ENCODE measurements at regions of chr16 and their contacts with region 1.

Region 1: GRCh38 chr16:67822511-67822910 is 15.8 kb downstream of the TSNAXIP1 start:
- DNase-seq: no peak
- ATAC-seq: peak in 1 of 8 donors; percentile 6
- H3K4me3 ChIP-seq: no peak overlapping the region
- H3K27ac ChIP-seq: no peak overlapping the region
- H3K4me1 ChIP-seq: no peaks in the 10 kb centered on the region
- H3K27me3 ChIP-seq: no peaks in the 10 kb centered on the region
- CTCF ChIP-seq: no peak

Region 2: GRCh38 chr16:67917852-67918236 is 95.3 kb after region 1 on chr16:
- intact Hi-C with region 1: loop called in 1 of 10 experiments (anchors 5 kb)
- DNase-seq: no peak
- ATAC-seq: peak in 5 of 8 donors; percentile 8 to 73 (median 36)
- H3K4me3 ChIP-seq: no peak overlapping the region
- H3K27ac ChIP-seq: peak overlapping the region in 9 of 10 donors; percentile 17 to 83 (median 53)
- H3K4me1 ChIP-seq: peaks cover 25 to 82% (median 61%) of the 10 kb centered on the region in 9 donors
- H3K27me3 ChIP-seq: no peaks in the 10 kb centered on the region
- CTCF ChIP-seq: no peak

Region 3: DNA sequence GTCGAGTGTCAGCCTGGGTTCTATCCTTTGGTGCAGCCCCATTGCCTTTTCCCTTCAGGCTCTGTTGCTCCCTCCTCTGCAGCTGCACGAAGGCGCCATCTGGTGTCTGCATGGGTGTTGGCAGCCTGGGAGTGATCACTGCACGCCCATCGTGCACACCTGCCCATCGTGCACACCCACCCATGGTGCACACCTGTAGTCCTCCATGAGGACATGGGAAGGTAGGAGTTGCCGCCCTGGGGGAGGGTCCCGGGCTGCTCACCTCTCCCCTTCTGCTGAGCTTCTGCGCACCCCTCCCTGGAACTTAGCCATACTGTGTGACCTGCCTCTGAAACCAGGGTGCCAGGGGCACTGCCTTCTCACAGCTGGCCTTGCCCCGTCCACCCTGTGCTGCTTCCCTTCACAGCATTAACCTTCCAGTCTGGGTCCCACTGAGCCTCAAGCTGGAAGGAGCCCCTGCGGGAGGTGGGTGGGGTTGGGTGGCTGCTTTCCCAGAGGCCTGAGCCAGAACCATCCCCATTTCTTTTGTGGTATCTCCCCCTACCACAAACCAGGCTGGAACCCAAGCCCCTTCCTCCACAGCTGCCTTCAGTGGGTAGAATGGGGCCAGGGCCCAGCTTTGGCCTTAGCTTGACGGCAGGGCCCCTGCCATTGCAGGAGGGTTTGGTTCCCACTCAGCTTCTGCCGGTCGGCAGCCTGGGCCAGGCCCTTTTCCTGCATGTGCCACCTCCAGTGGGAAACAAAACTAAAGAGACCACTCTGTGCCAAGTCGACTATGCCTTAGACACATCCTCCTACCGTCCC is 106.3 kb after region 1 on chr16:
- intact Hi-C with region 1: loop called in 6 of 10 experiments (anchors 2 to 5 kb)
- DNase-seq: peak; percentile 67 to 78
- ATAC-seq: peak; percentile 51 to 77 (median 67)
- H3K4me3 ChIP-seq: no peak overlapping the region
- H3K27ac ChIP-seq: peak overlapping the region in 1 of 10 donors; percentile 4
- H3K4me1 ChIP-seq: peaks cover 0 to 39% (median 20%) of the 10 kb centered on the region in 9 donors
- H3K27me3 ChIP-seq: no peaks in the 10 kb centered on the region
- CTCF ChIP-seq: peak; percentile 69 to 91 (median 85)

Region 4: DNA sequence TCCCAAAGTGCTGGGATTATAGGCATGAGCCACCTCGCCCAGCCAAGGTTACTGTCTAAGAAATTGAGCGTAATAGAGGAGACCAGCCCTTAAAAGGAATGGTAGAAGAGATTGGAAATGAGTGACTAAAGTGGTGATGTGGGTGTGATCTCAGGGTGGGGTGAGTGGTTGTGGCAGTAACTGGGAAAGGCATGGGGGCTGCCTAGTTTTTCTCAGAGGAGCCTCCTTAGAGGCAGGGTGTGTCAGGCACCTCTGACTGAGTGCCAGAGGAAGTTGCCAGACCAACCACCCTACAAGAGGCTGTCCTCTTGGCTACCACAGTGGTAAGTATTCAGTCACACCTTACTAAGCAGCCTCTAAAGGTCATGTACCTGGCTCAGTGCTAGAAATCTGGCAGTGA is 209.4 kb after region 1 on chr16:
- intact Hi-C with region 1: loop called in 4 of 10 experiments (anchors 5 to 10 kb)
- DNase-seq: no peak
- ATAC-seq: no peak
- H3K4me3 ChIP-seq: no peak overlapping the region
- H3K27ac ChIP-seq: no peak overlapping the region
- H3K4me1 ChIP-seq: peaks cover 0 to 5% (median 0%) of the 10 kb centered on the region in 9 donors
- H3K27me3 ChIP-seq: no peaks in the 10 kb centered on the region
- CTCF ChIP-seq: no peak

Measured in heart right ventricle (tissue), 16 donors.